HCT116 (cell line): ENCODE measurements at regions of chr22 and their contacts with region 1.

Region 1: GRCh38 chr22:36470162-36470993 is 11.1 kb downstream of the TXN2 start:
- DNase-seq: peak; percentile 60
- ATAC-seq: peak; percentile 55
- H3K4me3 ChIP-seq: no peak overlapping the region
- H3K27ac ChIP-seq: peak overlapping the region; percentile 31; the same call in 1 of the 2 replicates
- H3K4me1 ChIP-seq: peaks cover 45 to 51% of the 10 kb centered on the region in 2 experiments
- H3K27me3 ChIP-seq: no peaks in the 10 kb centered on the region
- CTCF ChIP-seq: peak; percentile 85 to 96 (median 94)
- POLR2A ChIP-seq: no peak
- RAD21 ChIP-seq: peak; percentile 98

Region 2: DNA sequence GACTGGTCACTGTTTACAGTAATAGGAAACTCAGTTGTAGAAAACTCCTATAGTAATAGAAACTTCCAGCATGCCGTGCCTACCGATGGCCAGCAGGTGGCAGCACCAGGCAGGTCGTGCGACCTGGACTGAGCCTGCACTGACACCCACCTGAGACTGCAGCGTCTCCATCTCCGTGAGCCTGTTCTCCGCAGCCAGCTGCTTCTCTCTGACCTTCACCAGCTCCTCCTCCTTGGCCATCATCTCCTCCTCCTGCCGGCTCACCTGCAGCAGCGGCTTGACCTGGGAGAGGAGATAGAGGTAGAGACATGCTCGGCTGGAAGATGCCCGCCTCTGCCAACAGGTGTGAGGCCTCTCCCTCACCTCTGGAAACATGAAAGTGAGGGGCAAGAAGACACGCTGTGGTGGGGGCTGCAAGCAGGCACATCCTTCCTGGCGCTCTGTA is 169.0 kb before region 1 on chr22:
- CTCF ChIA-PET with region 1: interaction called, 28 read pairs
- POLR2A ChIA-PET with region 1: interaction called, 3 read pairs
- RAD21 ChIA-PET with region 1: interaction called, 8 to 16 read pairs
- intact Hi-C with region 1: loop called (anchors 1 kb)
- DNase-seq: peak; percentile 29
- ATAC-seq: peak; percentile 87
- H3K4me3 ChIP-seq: no peak overlapping the region
- H3K27ac ChIP-seq: no peak overlapping the region
- H3K4me1 ChIP-seq: no peaks in the 10 kb centered on the region
- H3K27me3 ChIP-seq: no peaks in the 10 kb centered on the region
- CTCF ChIP-seq: peak; percentile 70 to 95 (median 95); a peak in 5 of 6 replicates
- POLR2A ChIP-seq: no peak
- RAD21 ChIP-seq: peak; percentile 91

Region 3: GRCh38 chr22:36369922-36370791 is 100.2 kb before region 1 on chr22:
- CTCF ChIA-PET with region 1: interaction called, 5 read pairs
- POLR2A ChIA-PET with region 1: no interaction called
- RAD21 ChIA-PET with region 1: no interaction called
- intact Hi-C with region 1: loop called (anchors 5 kb)
- DNase-seq: no peak
- ATAC-seq: peak; percentile 35
- H3K4me3 ChIP-seq: no peak overlapping the region
- H3K27ac ChIP-seq: peak overlapping the region; percentile 79
- H3K4me1 ChIP-seq: peaks cover 97 to 100% of the 10 kb centered on the region in 2 experiments
- H3K27me3 ChIP-seq: no peaks in the 10 kb centered on the region
- CTCF ChIP-seq: no peak
- POLR2A ChIP-seq: no peak
- RAD21 ChIP-seq: no peak